ENCODE measurements at regions of chr9 and their contacts with region 1.

Region 1: DNA sequence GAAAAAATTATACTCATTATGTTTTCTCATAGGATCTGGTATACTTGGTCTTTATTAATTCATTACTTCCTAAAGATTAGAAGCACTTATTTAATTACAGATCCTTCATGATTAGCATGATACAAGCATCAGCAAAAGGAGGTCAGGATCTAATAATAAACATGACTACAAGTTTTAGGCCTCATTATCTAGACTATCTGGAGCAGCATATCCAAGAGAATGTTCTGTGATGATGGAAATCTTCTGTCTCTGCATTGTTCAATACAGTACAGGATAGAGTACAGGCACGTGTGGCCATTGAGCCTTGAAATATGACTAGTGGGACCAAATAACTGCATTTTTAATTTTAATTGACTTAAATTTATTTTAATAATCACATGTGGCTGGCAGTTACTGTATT is 21.2 kb downstream of the SETX start:
- DNase-seq: no peak
- ATAC-seq: no peak

Region 2: GRCh38 chr9:132288361-132288760 is 45.2 kb before region 1 on chr9:
- intact Hi-C with region 1: loop called (anchors 10 kb)
- DNase-seq: no peak
- ATAC-seq: no peak

Region 3: DNA sequence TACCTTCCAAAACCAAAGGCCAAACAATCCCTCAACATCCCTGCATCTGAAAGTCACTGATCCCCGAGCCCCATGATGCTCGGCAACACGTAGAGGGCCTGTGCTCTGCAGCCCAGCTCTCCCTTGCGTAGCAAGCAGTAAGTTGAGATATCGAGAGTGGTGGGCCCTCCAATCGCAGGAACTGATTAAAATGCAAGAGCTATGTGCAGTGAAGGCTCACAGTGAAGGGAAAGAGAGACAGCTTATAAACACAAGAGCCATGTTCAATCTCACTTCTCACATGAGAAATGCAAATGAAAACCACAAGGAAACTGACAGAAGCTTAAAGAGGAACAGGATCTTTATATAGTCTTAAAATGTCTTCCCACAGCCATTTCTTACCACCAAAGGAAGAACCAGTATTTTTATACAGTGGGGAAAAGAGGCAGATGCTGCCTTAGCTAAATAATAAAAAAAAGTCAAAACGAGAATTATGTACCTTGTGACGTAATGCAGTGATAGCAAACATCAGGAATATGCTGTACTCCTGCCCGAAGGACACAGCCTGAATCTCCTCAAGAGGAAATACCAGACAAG is 48.5 kb after region 1 on chr9:
- intact Hi-C with region 1: loop called (anchors 5 kb)
- DNase-seq: no peak
- ATAC-seq: no peak

Region 4: DNA sequence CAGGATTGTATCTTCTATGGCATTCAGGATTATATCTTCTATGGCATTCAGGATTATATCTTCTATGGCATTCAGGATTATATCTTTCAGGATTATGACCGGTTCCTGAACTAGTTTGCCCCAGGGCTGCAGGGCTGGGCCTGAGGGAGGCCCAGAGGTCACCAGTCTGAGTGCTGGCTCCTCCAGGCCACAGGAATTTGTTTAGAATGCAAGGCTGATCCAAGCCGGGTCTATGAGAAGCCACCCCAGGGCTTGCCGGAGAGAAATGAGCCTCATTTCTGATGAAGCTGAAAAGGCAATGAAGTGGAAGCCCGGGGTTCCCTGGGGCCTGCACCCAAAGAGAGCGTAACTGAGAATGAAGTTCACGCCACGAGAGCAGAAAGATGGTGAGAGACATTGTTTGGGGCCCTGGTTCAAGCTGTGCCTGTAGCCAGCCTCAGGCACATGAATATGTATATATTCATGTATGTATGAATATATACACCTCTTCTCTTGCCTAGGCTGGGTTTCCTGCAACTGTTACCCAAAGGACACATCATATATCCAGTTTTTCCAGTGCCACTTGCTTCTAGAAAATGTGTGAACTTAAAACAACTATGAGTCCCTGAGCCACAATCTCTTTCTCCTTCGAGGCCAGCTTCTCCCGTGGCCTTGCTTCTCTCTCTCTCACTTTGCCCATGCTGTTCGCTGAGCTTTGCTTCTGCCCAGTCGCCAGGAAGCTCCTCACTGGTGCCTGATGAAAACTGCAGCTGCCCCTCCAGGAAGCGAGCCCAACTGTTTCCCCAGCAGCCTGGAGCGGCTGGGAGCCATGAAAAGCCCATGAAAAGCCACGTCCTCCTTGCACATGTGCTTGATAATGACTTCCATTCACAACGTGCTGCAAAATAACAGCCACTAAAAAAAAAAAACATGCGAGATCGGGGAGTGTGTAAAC is 399.0 kb after region 1 on chr9:
- intact Hi-C with region 1: no loop called
- DNase-seq: no peak
- ATAC-seq: no peak

Measured in Right ventricle myocardium inferior (tissue), 1 donor.